ENCODE measurements at regions of chr16 and their contacts with region 1.

Region 1: DNA sequence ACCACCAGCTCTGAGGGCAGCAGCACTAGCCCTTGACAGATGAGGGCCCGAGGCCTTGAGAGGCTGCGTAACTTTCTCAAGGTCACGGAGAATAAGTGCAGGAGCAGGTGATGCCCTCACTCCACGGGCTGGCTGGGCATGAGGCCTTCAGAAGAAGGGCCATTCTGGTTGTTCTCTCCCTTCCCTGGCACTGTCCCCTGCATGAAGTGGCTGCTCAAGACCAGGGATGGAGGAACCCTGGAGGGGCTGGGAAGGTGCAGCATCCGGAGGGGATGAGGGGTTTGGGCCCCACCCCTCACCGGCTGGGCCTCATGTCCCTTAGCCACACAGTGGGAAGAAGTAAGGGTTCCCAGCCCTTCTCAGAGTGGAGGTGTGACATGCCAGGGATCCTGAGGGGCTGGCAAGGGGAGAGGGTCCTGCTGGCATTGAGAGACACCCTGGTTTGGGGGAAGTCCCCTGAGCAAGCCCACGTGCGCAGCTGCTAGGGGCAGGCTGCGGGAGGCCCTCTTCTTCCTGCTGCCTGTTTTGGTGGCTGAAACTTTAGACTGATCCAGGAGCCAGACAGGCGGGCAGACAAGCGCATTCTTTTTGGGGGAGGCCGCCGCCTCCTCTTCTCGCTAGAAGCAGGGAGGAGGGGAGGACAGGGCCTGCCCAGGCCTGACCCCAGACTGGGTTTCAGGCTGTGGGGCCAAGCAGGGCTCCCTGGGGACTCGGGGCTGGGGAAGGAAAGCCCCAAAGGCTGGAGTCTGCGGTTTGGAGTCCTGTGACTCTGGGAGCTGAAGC is 74.0 kb downstream of the N4BP1 start:
- DNase-seq: peak; percentile 77
- ATAC-seq: peak; percentile 40

Region 2: DNA sequence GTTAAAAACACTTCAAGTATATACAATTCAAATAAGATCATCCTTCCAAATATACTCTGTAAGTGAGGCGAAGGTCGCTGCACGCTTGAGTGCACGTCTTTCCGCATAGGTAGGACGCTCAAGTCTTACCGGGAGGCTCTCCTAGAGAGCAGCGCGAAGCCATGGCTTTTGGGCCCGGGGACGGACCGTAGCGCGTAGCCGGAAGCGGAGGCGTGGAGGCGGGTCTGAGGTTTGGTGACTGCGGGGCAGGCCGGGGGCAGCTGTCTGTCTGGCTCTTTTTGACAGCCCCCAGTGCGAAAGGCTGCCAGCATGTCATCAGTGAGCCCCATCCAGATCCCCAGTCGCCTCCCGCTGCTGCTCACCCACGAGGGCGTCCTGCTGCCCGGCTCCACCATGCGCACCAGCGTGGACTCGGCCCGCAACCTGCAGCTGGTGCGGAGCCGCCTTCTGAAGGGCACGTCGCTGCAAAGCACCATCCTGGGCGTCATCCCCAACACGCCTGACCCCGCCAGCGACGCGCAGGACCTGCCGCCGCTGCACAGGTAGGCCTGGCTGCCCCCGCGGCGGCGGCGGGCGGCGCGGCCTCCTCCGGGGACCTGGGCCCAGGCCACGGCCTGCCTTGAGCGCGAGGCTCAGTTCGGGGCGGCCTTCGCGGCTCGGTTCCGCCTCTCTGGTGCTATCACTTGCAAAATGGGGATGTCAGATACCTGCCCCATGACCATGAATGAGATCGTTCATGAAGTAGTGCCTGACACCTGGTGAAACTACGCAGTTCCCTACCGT is 291.8 kb before region 1 on chr16 and contains the start of gene LONP2:
- intact Hi-C with region 1: loop called (anchors 10 kb)
- DNase-seq: peak; percentile 95
- ATAC-seq: peak; percentile 99
- total RNA-seq, gene LONP2: 61.3 TPM

Region 3: DNA sequence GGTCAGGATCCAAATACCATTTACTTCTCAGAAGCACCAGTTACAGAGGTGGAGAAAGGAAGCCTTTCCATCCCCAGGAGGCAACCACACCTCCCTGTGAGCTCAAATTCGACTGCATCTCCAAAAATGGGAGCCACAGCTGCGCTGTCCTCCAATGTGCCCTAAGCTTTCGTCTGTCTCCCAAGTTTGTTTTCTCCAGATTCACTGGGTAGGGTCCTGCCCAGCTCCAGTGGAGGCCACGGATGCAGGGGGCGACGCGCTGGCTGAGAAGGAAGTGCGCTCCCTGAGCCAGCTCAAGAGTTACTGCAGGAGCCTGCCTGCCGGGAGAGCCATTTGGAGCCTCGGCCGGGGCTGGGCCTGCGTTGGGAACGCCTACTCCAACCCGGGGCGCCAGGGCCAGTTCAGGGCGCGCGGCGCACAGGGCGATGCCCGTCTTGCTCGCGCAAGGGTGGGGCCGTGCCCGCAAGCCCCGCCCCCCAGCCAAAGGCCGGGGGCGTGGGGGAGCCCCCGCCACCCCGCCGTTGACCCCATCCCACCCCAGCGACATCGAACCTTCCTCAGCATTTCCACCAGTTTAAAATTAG is 170.3 kb before region 1 on chr16:
- intact Hi-C with region 1: loop called (anchors 5 kb)
- DNase-seq: peak; percentile 96
- ATAC-seq: peak; percentile 99

Region 4: GRCh38 chr16:48405153-48405882 is 130.7 kb before region 1 on chr16:
- intact Hi-C with region 1: no loop called
- DNase-seq: no peak
- ATAC-seq: no peak

Region 5: GRCh38 chr16:48623304-48624016 is 87.4 kb after region 1 on chr16:
- intact Hi-C with region 1: loop called (anchors 2 kb)
- DNase-seq: peak; percentile 93
- ATAC-seq: peak; percentile 97

Measured in Right ventricle myocardium inferior (tissue), 1 donor.